RWPE1 (cell line): ENCODE measurements at regions of chr20 and their contacts with region 1.

Region 1: DNA sequence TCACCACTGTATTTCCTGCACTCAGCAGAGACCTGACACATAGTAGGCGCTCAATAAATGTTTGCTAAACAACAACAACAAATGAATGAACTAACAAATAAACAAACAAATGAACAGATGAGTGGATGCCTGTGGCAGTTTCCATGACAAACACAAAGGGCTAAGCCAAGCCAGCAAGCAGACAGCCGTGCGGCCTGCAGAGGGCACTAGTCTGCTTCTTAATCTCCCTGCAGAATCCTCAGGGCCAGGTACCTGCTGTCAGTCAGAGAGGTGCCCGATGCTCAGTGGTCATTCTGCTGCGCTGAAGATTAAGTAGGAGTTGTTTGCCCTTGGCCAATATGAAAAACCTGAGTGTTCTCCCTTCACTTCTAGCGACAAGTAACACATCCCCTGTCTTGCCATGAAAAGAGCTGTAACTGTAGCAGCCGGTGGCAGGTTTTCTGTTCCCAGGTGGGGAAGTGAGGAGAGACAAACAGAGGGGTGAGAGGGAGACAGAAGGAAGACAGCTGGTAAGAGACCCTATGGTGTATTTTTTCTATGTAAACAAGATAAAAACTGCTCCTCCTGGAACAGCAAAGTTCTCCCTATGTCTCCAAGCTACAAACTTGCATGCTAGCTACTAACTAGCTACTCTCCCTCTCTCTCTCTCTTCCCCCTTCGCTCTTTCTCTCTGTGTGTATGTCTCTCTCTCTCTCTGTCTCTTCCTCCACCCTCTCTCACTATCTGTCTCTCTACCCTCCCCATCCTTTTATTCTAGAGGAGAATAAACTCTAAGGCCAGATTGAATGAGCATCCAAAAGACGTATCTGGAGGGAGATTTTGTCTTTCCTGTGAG is at the start of gene MC3R:
- DNase-seq: peak; percentile 75
- H3K27ac ChIP-seq: no peak within 1 kb of the TSS
- CTCF ChIP-seq: peak; percentile 87

Region 2: DNA sequence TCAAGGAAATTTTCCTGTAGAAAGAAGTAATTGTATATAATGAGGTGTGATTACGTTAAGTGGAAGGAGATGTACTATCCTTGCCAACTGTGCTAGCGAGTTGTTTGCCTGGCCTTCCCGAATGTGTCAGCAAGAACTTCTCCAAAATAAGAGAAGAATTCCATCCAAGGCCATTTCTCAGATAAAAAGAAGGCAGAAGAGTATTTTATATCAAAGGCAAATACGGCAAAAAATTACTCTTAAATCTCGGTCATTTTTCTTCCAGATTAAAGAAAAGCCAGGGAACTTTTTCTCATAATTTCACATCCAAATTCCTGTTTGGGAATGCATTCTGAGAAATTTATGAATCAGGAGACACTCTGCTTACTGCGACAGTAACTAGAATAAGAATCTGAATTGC is 533.4 kb before region 1 on chr20:
- CTCF ChIA-PET with region 1: no interaction called
- POLR2A ChIA-PET with region 1: no interaction called
- DNase-seq: no peak
- H3K27ac ChIP-seq: no peak overlapping the region
- CTCF ChIP-seq: no peak

Region 3: DNA sequence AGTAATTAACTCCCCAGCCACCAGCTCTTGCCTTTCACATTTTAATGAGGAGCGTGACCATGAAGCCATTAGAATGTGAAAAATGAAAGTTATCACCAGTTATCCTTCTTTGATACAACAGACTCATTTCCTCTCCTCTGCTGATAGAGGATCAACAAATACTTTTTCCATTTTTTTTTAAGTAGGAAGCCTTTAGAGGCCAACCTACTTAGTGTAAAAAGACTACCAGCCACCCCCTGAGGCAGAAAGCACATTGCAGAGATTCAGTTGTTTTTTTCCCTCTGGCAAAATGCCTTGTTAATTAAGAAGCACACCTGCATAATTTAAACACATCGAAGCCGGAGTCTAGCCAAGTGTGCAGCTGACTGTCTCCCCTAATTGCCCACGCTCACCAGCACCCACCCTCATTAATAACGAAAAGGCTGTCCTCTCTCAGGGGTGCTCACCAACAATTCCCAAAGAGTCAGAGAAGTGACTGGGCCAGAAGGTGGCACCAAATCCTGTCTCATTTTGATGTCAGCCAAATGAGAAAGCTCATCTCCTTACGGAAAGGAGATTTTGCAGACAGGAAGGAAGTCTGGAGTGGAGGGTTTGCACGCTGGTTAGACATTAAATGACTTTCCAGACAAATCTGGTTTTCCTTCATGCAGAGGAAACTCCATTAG is 60.5 kb before region 1 on chr20:
- CTCF ChIA-PET with region 1: interaction called, 11 read pairs
- POLR2A ChIA-PET with region 1: no interaction called
- DNase-seq: peak; percentile 36
- H3K27ac ChIP-seq: no peak overlapping the region
- CTCF ChIP-seq: peak; percentile 81

Region 4: GRCh38 chr20:56271974-56272373 is 23.8 kb after region 1 on chr20:
- CTCF ChIA-PET with region 1: no interaction called
- POLR2A ChIA-PET with region 1: no interaction called
- DNase-seq: no peak
- H3K27ac ChIP-seq: no peak overlapping the region
- CTCF ChIP-seq: no peak

Region 5: DNA sequence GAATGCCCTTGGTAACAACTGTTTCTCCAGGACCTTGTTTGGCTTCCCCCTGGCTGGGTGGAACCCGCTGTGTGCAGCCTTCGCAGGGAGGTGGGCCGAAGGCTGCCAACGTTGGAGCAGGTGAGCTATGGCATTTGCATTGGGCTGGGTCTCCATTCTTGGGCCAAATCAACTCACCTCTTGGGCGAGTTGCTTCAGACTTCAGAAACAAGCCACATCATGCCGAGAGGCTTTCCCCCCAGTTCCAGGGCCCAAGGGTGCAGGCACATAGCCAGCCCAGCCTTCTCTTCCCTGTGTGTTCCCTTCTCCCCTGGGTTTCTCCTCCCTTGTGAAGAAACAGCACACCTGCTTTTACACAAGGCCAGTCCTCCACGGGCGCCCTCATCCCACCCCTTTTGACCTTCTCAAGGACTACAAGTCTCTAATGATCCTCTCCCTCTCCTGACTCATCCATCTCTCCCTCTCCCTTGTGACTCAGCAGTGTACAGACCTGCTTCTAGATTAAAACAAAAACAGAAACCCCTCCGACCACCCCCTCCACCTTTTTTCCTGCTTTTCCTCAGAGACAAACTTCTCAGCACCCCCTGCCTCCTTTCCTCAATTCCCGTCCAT is 326.5 kb after region 1 on chr20:
- CTCF ChIA-PET with region 1: no interaction called
- POLR2A ChIA-PET with region 1: no interaction called
- DNase-seq: peak; percentile 87
- H3K27ac ChIP-seq: peak overlapping the region; percentile 89
- CTCF ChIP-seq: no peak

Region 6: DNA sequence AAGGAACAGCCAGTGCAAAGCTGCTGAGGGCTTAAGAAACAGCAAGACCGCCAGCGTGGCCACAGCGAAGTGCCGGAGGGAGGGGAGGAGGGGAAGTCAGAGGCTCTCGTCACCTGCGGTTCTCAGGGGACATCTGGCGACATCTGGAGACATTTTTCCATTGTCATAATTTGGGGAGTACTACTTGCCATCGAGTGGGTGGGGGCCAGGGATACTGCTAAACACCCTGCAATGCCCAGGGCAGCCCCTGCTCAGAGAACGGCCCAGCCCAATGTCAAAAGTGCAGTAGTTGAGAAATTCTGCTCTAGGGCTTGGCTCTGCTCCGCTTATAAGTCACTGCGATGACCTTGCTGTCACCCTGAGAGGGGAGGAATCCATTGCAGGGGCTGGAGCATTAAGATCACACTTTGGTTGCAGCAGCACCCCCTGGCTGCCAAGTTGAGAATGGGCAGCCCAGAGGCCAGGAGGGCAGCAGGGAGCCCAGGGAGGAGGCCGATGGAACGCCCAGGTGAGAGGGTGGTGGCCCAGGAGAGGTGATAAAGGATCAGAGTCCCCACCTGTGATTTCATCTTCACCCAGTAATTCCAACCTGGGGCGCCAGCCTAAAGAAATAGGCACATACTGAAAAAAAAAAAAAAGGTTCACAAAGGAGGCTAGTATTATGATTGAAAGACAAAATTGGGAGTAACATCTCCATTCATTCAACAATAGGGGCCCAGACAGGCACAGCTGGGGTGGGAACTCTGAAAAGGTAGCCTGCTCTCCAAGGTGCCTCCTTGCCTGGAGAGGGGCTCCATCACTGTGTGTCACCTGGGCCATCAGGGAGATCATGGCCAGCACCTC is 800.1 kb after region 1 on chr20:
- CTCF ChIA-PET with region 1: no interaction called
- POLR2A ChIA-PET with region 1: no interaction called
- DNase-seq: peak; percentile 39
- H3K27ac ChIP-seq: no peak overlapping the region
- CTCF ChIP-seq: peak; percentile 36; the same call in 1 of the 2 replicates